Transverse colon (tissue), 4 donors: ENCODE measurements at regions of chr12 and their contacts with region 1.

Region 1: GRCh38 chr12:99977550-99977949 is 7.2 kb downstream of the ANKS1B start:
- DNase-seq: no peak
- H3K4me3 ChIP-seq: no peak overlapping the region
- H3K27ac ChIP-seq: no peak overlapping the region
- H3K4me1 ChIP-seq: no peaks in the 10 kb centered on the region
- H3K27me3 ChIP-seq: peaks cover 5% of the 10 kb centered on the region
- CTCF ChIP-seq: no peak
- EP300 ChIP-seq: no peak
- POLR2A ChIP-seq: no peak

Region 2: DNA sequence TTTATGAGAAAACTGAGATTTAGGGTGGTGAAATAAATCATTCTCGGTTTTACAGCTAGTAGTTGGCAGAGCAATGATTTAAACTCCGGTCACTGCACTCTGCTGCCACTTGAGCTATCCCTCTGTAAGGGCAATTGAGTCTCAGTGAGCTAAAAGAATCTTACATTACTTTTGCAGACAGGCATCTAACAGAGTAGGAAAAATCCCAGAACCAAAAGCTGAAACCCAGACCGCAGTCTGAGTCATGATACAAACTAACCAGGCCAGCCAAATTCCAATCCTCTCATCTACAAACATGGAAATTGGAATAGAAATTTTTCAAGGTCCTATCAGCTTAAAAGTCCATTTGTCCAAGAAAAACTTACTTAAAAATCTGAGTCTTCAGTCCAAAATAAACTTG is 66.5 kb before region 1 on chr12:
- in situ Hi-C with region 1: no loop called
- intact Hi-C with region 1: loop called (anchors 10 kb)
- DNase-seq: no peak
- H3K4me3 ChIP-seq: no peak overlapping the region
- H3K27ac ChIP-seq: peak overlapping the region; percentile 51 to 74 (median 70)
- H3K4me1 ChIP-seq: peaks cover 0 to 7% (median 0%) of the 10 kb centered on the region in 4 donors
- H3K27me3 ChIP-seq: no peaks in the 10 kb centered on the region
- CTCF ChIP-seq: no peak
- EP300 ChIP-seq: no peak
- POLR2A ChIP-seq: no peak